ENCODE measurements at regions of chr3 and their contacts with region 1.

Region 1: GRCh38 chr3:112437146-112438022 is 61.9 kb downstream of the BTLA start:
- DNase-seq: peak; percentile 78
- H3K4me3 Mint-ChIP-seq: no peak overlapping the region
- H3K27ac Mint-ChIP-seq: peak overlapping the region; percentile 74
- H3K4me1 Mint-ChIP-seq: peaks cover 38% of the 10 kb centered on the region
- H3K27me3 Mint-ChIP-seq: no peaks in the 10 kb centered on the region

Region 2: GRCh38 chr3:112293368-112294321 is 143.7 kb before region 1 on chr3 and contains the start of gene SLC9C1:
- intact Hi-C with region 1: loop called (anchors 1 kb)
- DNase-seq: peak; percentile 87
- H3K4me3 Mint-ChIP-seq: peak within 1 kb of the TSS; percentile 76
- H3K27ac Mint-ChIP-seq: peak within 1 kb of the TSS; percentile 60
- H3K4me1 Mint-ChIP-seq: peaks cover 26% of the 10 kb centered on the region
- H3K27me3 Mint-ChIP-seq: no peaks in the 10 kb centered on the region
- total RNA-seq, gene SLC9C1: not detected in 2 replicates

Region 3: GRCh38 chr3:112333002-112333380 is 104.4 kb before region 1 on chr3 and contains the start of gene CD200:
- intact Hi-C with region 1: loop called (anchors 1 kb)
- DNase-seq: peak; percentile 87
- H3K4me3 Mint-ChIP-seq: peak within 1 kb of the TSS; percentile 90
- H3K27ac Mint-ChIP-seq: peak within 1 kb of the TSS; percentile 84
- H3K4me1 Mint-ChIP-seq: peaks cover 44% of the 10 kb centered on the region
- H3K27me3 Mint-ChIP-seq: no peaks in the 10 kb centered on the region
- total RNA-seq, gene CD200: 144 and 151 TPM in 2 replicates

Region 4: GRCh38 chr3:112390783-112391641 is 46.4 kb before region 1 on chr3:
- intact Hi-C with region 1: loop called (anchors 5 kb)
- DNase-seq: peak; percentile 73
- H3K4me3 Mint-ChIP-seq: peak overlapping the region; percentile 36
- H3K27ac Mint-ChIP-seq: peak overlapping the region; percentile 79
- H3K4me1 Mint-ChIP-seq: peaks cover 44% of the 10 kb centered on the region
- H3K27me3 Mint-ChIP-seq: no peaks in the 10 kb centered on the region

Region 5: GRCh38 chr3:112464264-112464663 is 26.9 kb after region 1 on chr3:
- intact Hi-C with region 1: loop called (anchors 1 kb)
- DNase-seq: no peak
- H3K4me3 Mint-ChIP-seq: peak overlapping the region; percentile 58
- H3K27ac Mint-ChIP-seq: peak overlapping the region; percentile 23
- H3K4me1 Mint-ChIP-seq: peaks cover 73% of the 10 kb centered on the region
- H3K27me3 Mint-ChIP-seq: no peaks in the 10 kb centered on the region

Region 6: GRCh38 chr3:112519424-112520001 is 82.1 kb after region 1 on chr3:
- intact Hi-C with region 1: loop called (anchors 1 kb)
- DNase-seq: peak; percentile 83
- H3K4me3 Mint-ChIP-seq: no peak overlapping the region
- H3K27ac Mint-ChIP-seq: no peak overlapping the region
- H3K4me1 Mint-ChIP-seq: peaks cover 20% of the 10 kb centered on the region
- H3K27me3 Mint-ChIP-seq: no peaks in the 10 kb centered on the region

Region 7: GRCh38 chr3:112539825-112540650 is 102.7 kb after region 1 on chr3:
- intact Hi-C with region 1: no loop called
- DNase-seq: no peak
- H3K4me3 Mint-ChIP-seq: no peak overlapping the region
- H3K27ac Mint-ChIP-seq: peak overlapping the region; percentile 34
- H3K4me1 Mint-ChIP-seq: peaks cover 13% of the 10 kb centered on the region
- H3K27me3 Mint-ChIP-seq: no peaks in the 10 kb centered on the region